HepG2 (cell line): ENCODE measurements at regions of chr20 and their contacts with region 1.

Region 1: GRCh38 chr20:62376112-62377063 is 9.3 kb upstream of the LAMA5 start:
- DNase-seq: peak; percentile 92
- ATAC-seq: peak; percentile 84
- H3K4me3 ChIP-seq: peak overlapping the region; percentile 47 to 71 (median 62)
- H3K27ac ChIP-seq: peak overlapping the region; percentile 63
- H3K4me1 ChIP-seq: peaks cover 60% of the 10 kb centered on the region
- H3K27me3 ChIP-seq: no peaks in the 10 kb centered on the region
- CTCF ChIP-seq: peak; percentile 97
- EP300 ChIP-seq: no peak
- POLR2A ChIP-seq: peak in 1 of 2 experiments; percentile 86; a peak in 2 of 4 replicates
- RAD21 ChIP-seq: peak; percentile 99

Region 2: GRCh38 chr20:61544910-61545889 is 831.2 kb before region 1 on chr20:
- CTCF ChIA-PET with region 1: no interaction called
- POLR2A ChIA-PET with region 1: no interaction called
- in situ Hi-C with region 1: no loop called
- intact Hi-C with region 1: no loop called
- DNase-seq: no peak
- ATAC-seq: no peak
- H3K4me3 ChIP-seq: no peak overlapping the region
- H3K27ac ChIP-seq: no peak overlapping the region
- H3K4me1 ChIP-seq: no peaks in the 10 kb centered on the region
- H3K27me3 ChIP-seq: peaks cover 12 to 70% of the 10 kb centered on the region in 2 experiments; a peak in 4 of 5 replicates
- CTCF ChIP-seq: no peak
- EP300 ChIP-seq: no peak
- POLR2A ChIP-seq: no peak
- RAD21 ChIP-seq: no peak

Region 3: DNA sequence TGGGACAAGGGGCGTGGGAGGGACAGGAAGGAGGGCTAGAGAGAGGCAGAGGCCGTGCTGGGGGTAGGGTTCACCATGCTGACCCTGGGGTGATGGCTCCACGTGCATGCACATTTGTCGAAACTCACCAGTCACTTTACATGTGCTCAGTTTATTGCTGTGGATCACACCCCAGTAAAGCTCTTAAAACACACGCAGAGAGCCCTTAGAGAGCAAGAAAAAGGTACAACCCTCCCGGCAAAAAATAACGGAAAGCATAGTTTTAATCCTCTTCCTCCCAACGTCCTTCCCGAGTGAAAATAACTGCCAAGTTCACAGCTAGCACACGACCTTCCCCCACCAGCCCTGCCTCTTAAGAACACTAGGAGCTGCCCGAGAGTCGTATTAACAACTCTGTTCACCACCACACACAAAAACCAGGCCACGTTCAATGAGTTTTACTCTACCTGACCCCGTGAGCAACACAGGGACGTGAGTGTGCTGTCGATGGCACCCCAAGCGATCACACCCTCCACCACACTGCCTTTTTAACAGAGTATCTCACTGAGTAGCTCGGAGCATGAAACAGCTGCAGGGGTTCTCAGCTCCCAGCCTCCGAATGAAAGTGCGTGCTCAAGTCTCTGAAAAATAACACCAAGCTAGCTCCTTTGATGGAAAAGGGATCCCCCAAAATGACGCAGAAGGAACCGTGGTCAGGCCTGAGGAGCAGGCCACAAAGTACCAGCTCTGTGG is 350.4 kb before region 1 on chr20:
- CTCF ChIA-PET with region 1: no interaction called
- POLR2A ChIA-PET with region 1: no interaction called
- in situ Hi-C with region 1: no loop called
- intact Hi-C with region 1: no loop called
- DNase-seq: peak; percentile 30
- ATAC-seq: peak; percentile 32; the same call in 2 of the 3 replicates
- H3K4me3 ChIP-seq: no peak overlapping the region
- H3K27ac ChIP-seq: peak overlapping the region; percentile 23
- H3K4me1 ChIP-seq: peaks cover 79% of the 10 kb centered on the region
- H3K27me3 ChIP-seq: no peaks in the 10 kb centered on the region
- CTCF ChIP-seq: peak; percentile 47; the same call in 1 of the 2 replicates
- EP300 ChIP-seq: no peak
- POLR2A ChIP-seq: no peak
- RAD21 ChIP-seq: 0 out of 2 replicates have a peak, but pooled peaks have one; percentile 18

Region 4: DNA sequence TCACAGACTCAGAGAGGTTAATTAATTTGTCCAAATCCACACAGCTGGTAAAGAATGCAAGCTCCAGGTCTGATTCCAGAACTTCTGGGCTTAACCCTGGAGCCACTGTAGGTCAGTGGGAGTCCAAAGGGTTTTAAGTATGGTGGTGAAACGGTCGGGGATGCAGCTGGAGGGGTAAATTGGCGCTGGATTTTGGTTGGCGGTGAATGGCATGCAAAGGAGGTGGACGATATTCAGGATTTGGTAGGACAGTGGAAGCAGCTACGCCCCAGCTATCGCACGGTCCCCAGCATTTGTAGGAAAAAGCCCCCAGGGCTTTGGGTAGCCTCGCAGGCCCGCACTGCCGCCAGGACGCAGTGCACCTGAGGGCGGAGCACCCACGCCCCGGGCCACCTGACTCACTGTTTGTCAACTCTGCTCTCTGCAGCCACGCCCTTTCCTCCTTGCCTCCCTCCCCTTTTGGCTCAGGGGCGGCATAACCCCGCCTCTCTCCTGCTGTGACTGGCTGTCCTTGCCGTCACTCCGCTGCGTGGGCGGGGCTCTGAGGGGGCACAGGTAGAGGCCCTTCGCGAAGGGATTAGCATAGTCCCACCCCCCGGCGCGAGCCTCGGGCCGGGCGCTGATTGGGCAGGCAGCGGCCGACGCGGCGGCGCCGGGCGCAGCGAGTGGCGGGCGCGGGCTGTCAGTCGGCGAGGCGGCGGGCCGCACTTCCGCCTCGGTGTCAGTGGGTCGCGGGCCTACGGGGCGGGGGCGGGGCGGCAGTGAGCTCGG is 138.4 kb before region 1 on chr20 and contains the start of gene OSBPL2:
- CTCF ChIA-PET with region 1: no interaction called
- POLR2A ChIA-PET with region 1: no interaction called
- in situ Hi-C with region 1: no loop called
- intact Hi-C with region 1: loop called (anchors 5 kb)
- DNase-seq: peak; percentile 99
- ATAC-seq: peak; percentile 89
- H3K4me3 ChIP-seq: peak within 1 kb of the TSS; percentile 85 to 97 (median 86)
- H3K27ac ChIP-seq: peak within 1 kb of the TSS; percentile 60
- H3K4me1 ChIP-seq: peaks cover 36% of the 10 kb centered on the region
- H3K27me3 ChIP-seq: peaks cover 3 to 18% of the 10 kb centered on the region in 2 experiments; a peak in 3 of 5 replicates
- CTCF ChIP-seq: peak; percentile 34; the same call in 1 of the 2 replicates
- EP300 ChIP-seq: peak in 1 of 2 experiments; percentile 59; a peak in 1 of 4 replicates
- POLR2A ChIP-seq: peak in 1 of 2 experiments; percentile 44; a peak in 2 of 4 replicates
- RAD21 ChIP-seq: peak; percentile 35; the same call in 1 of the 2 replicates
- total RNA-seq, gene OSBPL2: 37.4 and 41.5 TPM in 2 replicates

Region 5: GRCh38 chr20:62302341-62303058 is 73.9 kb before region 1 on chr20 and contains the start of gene ADRM1:
- CTCF ChIA-PET with region 1: interaction called, 73 read pairs
- POLR2A ChIA-PET with region 1: interaction called, 187 read pairs
- in situ Hi-C with region 1: no loop called
- intact Hi-C with region 1: loop called (anchors 1 kb)
- DNase-seq: peak; percentile 97
- ATAC-seq: peak; percentile 73
- H3K4me3 ChIP-seq: peak within 1 kb of the TSS; percentile 74 to 98 (median 93)
- H3K27ac ChIP-seq: peak within 1 kb of the TSS; percentile 97
- H3K4me1 ChIP-seq: peaks cover 50% of the 10 kb centered on the region
- H3K27me3 ChIP-seq: no peaks in the 10 kb centered on the region; a peak in 1 of 5 replicates
- CTCF ChIP-seq: peak; percentile 98
- EP300 ChIP-seq: peak; percentile 80 to 96; a peak in 3 of 4 replicates
- POLR2A ChIP-seq: peak in 1 of 2 experiments; percentile 70; a peak in 3 of 4 replicates
- RAD21 ChIP-seq: peak; percentile 94
- total RNA-seq, gene ADRM1: 143 and 154 TPM in 2 replicates

Region 6: GRCh38 chr20:62386383-62387218 is 10.2 kb after region 1 on chr20 and contains the start of gene RPS21:
- CTCF ChIA-PET with region 1: no interaction called
- POLR2A ChIA-PET with region 1: interaction called, 73 read pairs
- in situ Hi-C with region 1: no loop called
- intact Hi-C with region 1: no loop called
- DNase-seq: peak; percentile 92
- ATAC-seq: peak; percentile 84
- H3K4me3 ChIP-seq: peak within 1 kb of the TSS; percentile 97 to 99 (median 99)
- H3K27ac ChIP-seq: peak within 1 kb of the TSS; percentile 66
- H3K4me1 ChIP-seq: peaks cover 36% of the 10 kb centered on the region
- H3K27me3 ChIP-seq: no peaks in the 10 kb centered on the region; a peak in 2 of 5 replicates
- CTCF ChIP-seq: peak; percentile 43; the same call in 1 of the 2 replicates
- EP300 ChIP-seq: peak; percentile 24 to 28; a peak in 1 of 4 replicates
- POLR2A ChIP-seq: peak; percentile 92 to 94
- RAD21 ChIP-seq: peak; percentile 68
- total RNA-seq, gene RPS21: 2,584 and 2,647 TPM in 2 replicates